Ascending aorta (tissue), 2 donors: ENCODE measurements at regions of chr11 and their contacts with region 1.

Region 1: DNA sequence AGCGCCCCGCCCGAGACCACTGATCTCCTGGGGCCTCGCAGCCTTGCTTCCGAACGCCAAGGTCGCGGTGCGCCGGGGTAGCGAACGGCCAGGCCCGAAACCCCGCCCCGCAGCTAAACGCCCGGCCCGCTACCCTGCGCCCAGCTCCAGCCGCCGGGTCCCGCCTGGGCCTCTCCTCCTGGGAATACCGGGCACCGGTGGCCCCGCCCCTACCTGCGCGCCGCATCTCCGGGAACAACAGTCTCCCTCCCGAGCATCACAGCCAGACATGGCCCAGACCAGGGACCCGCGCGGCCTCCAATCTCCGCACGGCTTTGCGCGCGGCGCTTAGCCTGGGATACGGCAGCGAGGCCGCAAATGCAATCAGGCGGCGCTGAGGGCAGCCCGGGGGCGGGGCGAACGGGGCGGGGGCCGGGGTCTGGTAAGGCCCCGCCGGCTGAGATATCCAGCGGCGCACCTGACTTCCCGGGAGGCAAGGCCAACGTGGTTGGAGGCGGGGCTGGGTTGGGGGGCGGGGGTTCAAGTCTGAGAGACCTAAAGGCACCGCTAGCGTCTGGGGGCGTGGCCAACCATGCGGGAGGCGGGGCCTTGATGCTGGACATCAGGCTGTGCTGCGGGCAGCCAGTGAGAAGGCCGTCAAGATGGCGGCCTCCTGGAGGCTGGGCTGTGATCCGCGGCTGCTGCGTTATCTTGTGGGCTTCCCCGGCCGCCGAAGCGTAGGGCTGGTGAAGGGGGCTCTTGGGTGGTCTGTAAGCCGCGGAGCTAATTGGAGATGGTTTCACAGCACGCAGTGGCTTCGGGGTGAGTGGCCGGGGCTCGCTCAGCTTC is at the starts of genes APIP and PDHX:
- DNase-seq: peak; percentile 97 to 99
- H3K4me3 ChIP-seq: peak within 1 kb of the TSS; percentile 78 to 97
- H3K27ac ChIP-seq: peak within 1 kb of the TSS; percentile 92 to 97
- H3K4me1 ChIP-seq: peaks cover 4 to 14% of the 10 kb centered on the region in 2 donors
- H3K27me3 ChIP-seq: no peaks in the 10 kb centered on the region
- CTCF ChIP-seq: no peak
- total RNA-seq, gene APIP: 3.6 TPM
- total RNA-seq, gene PDHX: 23.3 TPM

Region 2: DNA sequence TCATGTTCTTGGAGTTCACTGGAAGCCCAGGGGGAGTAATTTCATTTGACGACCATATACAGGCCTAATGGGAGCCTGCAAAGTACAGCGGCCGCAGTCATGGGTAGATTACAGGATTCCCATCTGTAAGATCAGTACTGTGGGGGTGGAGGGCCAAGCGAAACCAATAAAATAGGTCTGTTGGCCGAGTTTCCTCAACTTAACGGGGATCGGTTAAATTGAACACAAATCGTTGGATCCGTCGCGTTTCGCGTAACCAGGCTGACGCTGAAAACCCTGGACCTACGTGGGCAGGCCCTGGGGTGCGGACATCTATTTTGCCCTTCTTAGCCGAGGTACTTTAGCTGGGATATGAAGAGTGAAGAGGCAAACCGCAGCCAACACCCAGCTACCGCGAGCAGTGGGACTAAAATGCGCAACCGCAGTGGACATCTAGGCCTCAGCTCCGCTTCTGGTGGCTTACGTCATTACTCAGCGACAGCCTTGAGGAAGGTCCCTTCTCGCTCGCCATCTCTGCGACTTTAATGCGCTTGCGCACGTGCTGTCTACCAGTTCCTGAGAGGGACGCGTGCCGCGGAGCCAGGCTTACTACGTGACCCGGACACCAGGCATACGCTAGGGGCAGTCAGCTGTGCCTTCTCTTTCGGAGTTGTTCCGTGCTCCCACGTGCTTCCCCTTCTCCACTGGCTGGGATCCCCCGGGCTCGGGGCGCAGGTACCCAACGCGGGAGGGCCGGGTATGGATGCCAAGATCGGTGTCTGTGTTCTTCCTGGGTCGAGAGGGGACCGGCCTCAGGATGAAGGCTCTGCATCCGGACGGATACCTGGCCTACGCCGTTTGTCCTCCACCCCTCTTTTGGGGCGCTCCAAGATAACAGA is 810.9 kb before region 1 on chr11 and contains the start of gene NAT10:
- intact Hi-C with region 1: loop called (anchors 10 kb)
- DNase-seq: peak; percentile 93 to 99
- H3K4me3 ChIP-seq: peak within 1 kb of the TSS; percentile 82 to 86
- H3K27ac ChIP-seq: peak within 1 kb of the TSS; percentile 93 to 95
- H3K4me1 ChIP-seq: peaks cover 4 to 5% of the 10 kb centered on the region in 2 donors
- H3K27me3 ChIP-seq: no peaks in the 10 kb centered on the region
- CTCF ChIP-seq: no peak
- total RNA-seq, gene NAT10: 11.3 TPM

Region 3: GRCh38 chr11:35030716-35031213 is 114.5 kb after region 1 on chr11:
- intact Hi-C with region 1: no loop called
- DNase-seq: peak; percentile 60 to 85
- H3K4me3 ChIP-seq: no peak overlapping the region
- H3K27ac ChIP-seq: peak overlapping the region in 1 of 2 donors; percentile 19
- H3K4me1 ChIP-seq: peaks cover 0 to 4% of the 10 kb centered on the region in 2 donors
- H3K27me3 ChIP-seq: no peaks in the 10 kb centered on the region
- CTCF ChIP-seq: no peak

Region 4: GRCh38 chr11:35082321-35083182 is 166.3 kb after region 1 on chr11:
- intact Hi-C with region 1: loop called (anchors 5 kb)
- DNase-seq: peak; percentile 37 to 81
- H3K4me3 ChIP-seq: no peak overlapping the region
- H3K27ac ChIP-seq: peak overlapping the region; percentile 67 to 69
- H3K4me1 ChIP-seq: peaks cover 13 to 42% of the 10 kb centered on the region in 2 donors
- H3K27me3 ChIP-seq: no peaks in the 10 kb centered on the region
- CTCF ChIP-seq: no peak

Region 5: DNA sequence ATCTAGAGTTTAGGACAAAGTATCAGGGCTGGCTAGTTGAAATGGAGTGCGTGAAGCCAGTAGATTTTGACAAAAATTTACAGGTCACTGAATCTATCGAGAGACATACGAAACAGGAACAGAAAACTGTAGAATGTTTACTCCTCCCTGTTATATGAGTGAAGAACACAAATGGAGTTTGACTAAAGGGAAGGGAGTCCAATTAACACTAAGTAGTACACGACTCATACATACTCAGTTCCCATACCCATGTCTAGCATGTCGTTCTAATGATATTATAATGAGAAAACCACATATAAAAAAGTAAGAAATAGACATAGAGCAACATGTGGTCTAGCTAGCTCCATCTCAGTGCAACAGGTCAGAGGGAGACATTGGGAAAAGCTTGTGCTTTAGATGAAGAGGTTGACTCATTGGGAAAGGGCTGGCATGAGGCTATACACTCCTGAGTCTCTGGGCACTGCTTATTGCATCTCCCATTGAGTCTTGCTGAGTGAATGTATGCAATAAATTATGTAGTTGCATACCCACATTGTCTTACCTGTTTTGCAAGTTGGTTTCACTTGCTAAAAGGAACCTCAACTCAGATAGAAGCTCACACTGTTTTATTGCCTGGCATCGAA is 266.2 kb after region 1 on chr11:
- intact Hi-C with region 1: loop called (anchors 5 kb)
- DNase-seq: no peak
- H3K4me3 ChIP-seq: no peak overlapping the region
- H3K27ac ChIP-seq: no peak overlapping the region
- H3K4me1 ChIP-seq: peaks cover 0 to 25% of the 10 kb centered on the region in 2 donors
- H3K27me3 ChIP-seq: no peaks in the 10 kb centered on the region
- CTCF ChIP-seq: no peak

Region 6: GRCh38 chr11:36509694-36510566 is 1593.7 kb after region 1 on chr11 and contains the start of gene TRAF6:
- intact Hi-C with region 1: loop called (anchors 5 kb)
- DNase-seq: peak; percentile 41 to 93
- H3K4me3 ChIP-seq: peak within 1 kb of the TSS; percentile 87 to 92
- H3K27ac ChIP-seq: peak within 1 kb of the TSS; percentile 86 to 91
- H3K4me1 ChIP-seq: peaks cover 0 to 3% of the 10 kb centered on the region in 2 donors
- H3K27me3 ChIP-seq: no peaks in the 10 kb centered on the region
- CTCF ChIP-seq: peak; percentile 85 to 90 (median 88)
- total RNA-seq, gene TRAF6: 4.8 TPM